B cell (primary cell): ENCODE measurements at regions of chr2 and their contacts with region 1.

Region 1: DNA sequence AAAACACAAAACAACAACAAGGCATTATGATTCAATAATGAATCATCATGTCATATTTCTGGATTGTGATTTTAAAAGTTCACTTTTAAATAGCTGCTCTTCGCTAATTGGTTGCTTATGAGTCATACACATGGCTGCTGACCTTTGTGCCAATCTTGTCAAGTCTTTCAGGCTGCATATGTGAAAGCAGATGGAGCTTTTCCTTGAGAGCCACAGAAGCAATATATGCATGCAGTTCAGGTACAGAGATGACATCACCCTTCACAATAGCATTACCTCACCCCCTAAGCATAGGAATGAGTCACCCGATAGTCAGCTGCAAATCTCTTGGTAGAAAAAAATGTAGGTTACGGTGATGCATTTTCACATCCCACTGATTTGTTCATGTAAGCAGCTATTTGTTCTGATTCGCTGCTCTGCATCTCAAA is 27.2 kb downstream of the EIF2AK3 start:
- DNase-seq: peak; percentile 94
- ATAC-seq: peak; percentile 93
- H3K4me3 ChIP-seq: peak overlapping the region in 2 of 5 experiments; percentile 19 to 55
- H3K4me3 Mint-ChIP-seq: peak overlapping the region; percentile 71
- H3K27ac ChIP-seq: peak overlapping the region; percentile 94 to 96
- H3K27ac Mint-ChIP-seq: peak overlapping the region; percentile 92
- H3K4me1 ChIP-seq: peaks cover 76 to 88% of the 10 kb centered on the region in 2 donors
- H3K4me1 Mint-ChIP-seq: peaks cover 82% of the 10 kb centered on the region
- H3K27me3 ChIP-seq: no peaks in the 10 kb centered on the region
- H3K27me3 Mint-ChIP-seq: no peaks in the 10 kb centered on the region
- CTCF ChIP-seq: no peak

Region 2: DNA sequence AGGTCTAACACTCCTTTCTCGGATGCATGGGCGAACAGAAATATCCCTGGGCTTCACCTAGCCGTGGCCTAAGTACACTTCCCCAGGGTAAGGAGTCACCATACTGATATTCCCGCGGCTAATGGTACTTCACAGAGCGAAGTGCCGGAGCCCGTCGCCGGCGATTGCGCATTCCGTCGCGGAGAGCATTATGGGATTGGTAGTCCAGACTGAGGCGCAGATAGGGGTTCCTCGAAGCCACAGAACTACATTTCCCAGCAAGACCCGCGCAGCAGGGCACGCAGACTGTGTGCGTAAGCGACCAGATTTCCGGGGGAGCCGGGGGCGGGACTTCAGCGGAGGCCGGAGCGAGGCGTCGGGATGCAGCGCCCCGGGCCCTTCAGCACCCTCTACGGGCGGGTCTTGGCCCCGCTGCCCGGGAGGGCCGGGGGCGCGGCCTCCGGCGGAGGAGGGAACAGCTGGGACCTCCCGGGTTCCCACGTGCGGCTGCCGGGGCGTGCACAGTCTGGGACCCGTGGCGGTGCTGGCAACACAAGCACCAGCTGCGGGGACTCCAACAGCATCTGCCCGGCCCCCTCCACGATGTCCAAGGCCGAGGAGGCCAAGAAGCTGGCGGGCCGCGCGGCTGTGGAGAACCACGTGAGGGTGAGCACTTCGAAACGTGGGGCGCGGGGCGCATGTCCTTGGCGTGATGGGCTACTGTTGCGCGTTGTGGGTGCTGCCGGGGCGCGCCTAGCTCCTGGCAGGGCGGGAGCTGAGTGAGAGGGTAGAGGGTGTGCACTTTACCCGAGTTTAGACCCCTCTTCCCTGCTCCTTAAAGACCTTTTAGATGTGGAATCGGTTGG is 91.5 kb after region 1 on chr2 and contains the start of gene RPIA:
- CTCF ChIA-PET with region 1: interaction called, 4 read pairs
- POLR2A ChIA-PET with region 1: interaction called, 3 read pairs
- intact Hi-C with region 1: loop called (anchors 2 kb)
- DNase-seq: peak; percentile 99
- ATAC-seq: peak; percentile 91
- H3K4me3 ChIP-seq: peak within 1 kb of the TSS; percentile 85 to 99 (median 95)
- H3K4me3 Mint-ChIP-seq: peak within 1 kb of the TSS; percentile 98
- H3K27ac ChIP-seq: peak within 1 kb of the TSS; percentile 68 to 69
- H3K27ac Mint-ChIP-seq: peak within 1 kb of the TSS; percentile 90
- H3K4me1 ChIP-seq: peaks cover 23 to 27% of the 10 kb centered on the region in 2 donors
- H3K4me1 Mint-ChIP-seq: peaks cover 52% of the 10 kb centered on the region
- H3K27me3 ChIP-seq: no peaks in the 10 kb centered on the region
- H3K27me3 Mint-ChIP-seq: no peaks in the 10 kb centered on the region
- CTCF ChIP-seq: peak; percentile 66
- total RNA-seq, gene RPIA: 19.7 and 22.8 TPM in 2 replicates